A549 (cell line): ENCODE measurements at regions of chr2 and their contacts with region 1.

Region 1: DNA sequence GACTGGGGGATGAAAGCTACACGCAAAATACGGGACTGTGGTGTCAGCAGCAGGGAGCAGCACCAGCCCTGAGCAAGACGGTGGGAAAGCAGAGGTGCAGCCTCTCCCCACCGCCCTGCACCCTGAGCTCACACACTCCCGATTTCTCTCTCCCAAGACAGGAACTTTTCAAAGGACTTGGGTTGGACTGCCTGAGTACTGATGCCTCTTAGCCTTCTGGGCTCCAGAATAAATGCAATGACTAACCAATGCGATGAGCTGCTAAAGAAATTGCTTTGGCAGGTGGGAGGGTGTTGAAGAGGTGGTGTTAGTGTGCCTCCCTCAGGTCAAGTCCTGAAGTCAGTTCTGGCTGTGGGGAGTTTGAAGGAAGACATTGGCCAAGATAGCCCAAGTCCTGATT is 9.6 kb downstream of the TRIM54 start:
- DNase-seq: peak; percentile 36 to 66
- ATAC-seq: peak; percentile 77 to 79
- H3K4me3 ChIP-seq: no peak overlapping the region
- H3K27ac ChIP-seq: peak overlapping the region; percentile 19 to 49; a peak in 4 of 6 replicates
- H3K4me1 ChIP-seq: peaks cover 36% of the 10 kb centered on the region
- CTCF ChIP-seq: peak; percentile 36
- EP300 ChIP-seq: no peak
- POLR2A ChIP-seq: no peak
- RAD21 ChIP-seq: peak; percentile 57 to 68

Region 2: DNA sequence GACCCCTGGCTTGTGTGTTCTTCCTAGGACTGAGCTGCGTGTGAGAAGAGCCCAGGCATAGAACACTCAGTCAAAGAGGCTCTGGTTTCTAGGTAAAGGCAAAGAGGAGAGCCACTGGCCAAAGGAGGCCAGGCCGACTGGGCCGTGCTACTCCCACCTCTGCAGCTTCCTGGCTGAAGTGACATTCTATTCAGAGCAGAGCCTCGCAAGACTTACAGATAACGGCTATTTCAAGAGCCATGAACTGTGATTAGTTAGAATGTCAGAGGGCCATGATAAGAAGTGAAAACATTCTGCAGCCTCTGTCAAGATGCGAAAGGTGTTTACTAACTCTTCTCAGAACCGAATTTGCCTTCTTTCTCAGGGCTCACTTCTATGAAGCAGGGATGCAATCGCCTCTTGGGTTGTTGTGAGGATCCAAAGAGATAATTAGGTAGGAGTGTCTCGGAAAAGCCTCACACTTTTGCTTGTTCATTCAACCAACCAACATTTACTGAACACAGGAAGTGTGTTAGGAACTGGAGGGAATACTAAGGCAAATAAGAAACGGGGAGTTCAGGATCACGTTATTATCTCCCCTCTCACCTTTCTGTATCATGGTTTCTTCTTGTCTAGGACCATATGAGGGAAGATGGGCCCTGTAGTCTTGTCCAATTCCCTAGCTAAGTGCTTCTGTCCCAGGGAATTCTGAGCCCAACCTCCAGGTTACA is 20.1 kb before region 1 on chr2:
- CTCF ChIA-PET with region 1: interaction called, 394 read pairs
- POLR2A ChIA-PET with region 1: interaction called, 4 read pairs
- DNase-seq: no peak
- ATAC-seq: peak; percentile 26 to 30; a peak in 2 of 6 replicates
- H3K4me3 ChIP-seq: no peak overlapping the region
- H3K27ac ChIP-seq: no peak overlapping the region
- H3K4me1 ChIP-seq: no peaks in the 10 kb centered on the region
- CTCF ChIP-seq: no peak
- EP300 ChIP-seq: no peak
- POLR2A ChIP-seq: no peak
- RAD21 ChIP-seq: no peak

Region 3: DNA sequence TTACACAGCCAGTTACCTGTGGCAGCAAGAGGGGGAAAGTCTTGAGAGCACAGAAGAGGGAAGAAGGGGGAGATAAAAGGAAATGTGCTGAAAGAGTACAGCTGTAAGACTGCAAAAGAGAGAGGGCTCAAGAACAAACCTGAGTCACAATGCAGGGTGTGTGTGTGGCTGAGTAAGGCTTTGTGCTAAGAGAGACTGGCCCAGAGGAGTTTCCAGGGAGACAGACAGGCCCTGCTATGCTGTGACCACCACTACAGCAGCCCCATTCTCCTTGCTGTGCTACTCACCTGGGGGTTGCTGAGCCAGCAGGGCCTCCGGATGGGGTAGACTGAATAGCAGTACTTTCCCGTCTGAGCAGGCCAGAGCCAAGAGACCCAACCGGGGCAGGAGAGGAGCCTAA is 43.4 kb after region 1 on chr2:
- CTCF ChIA-PET with region 1: no interaction called
- POLR2A ChIA-PET with region 1: no interaction called
- DNase-seq: no peak
- ATAC-seq: peak; percentile 16 to 50; a peak in 4 of 6 replicates
- H3K4me3 ChIP-seq: no peak overlapping the region
- H3K27ac ChIP-seq: no peak overlapping the region
- H3K4me1 ChIP-seq: no peaks in the 10 kb centered on the region
- CTCF ChIP-seq: no peak
- EP300 ChIP-seq: no peak
- POLR2A ChIP-seq: no peak
- RAD21 ChIP-seq: no peak